RWPE1 (cell line): ENCODE measurements at regions of chr6 and their contacts with region 1.

Region 1: GRCh38 chr6:35710241-35710847 is 21.6 kb upstream of the FKBP5 start:
- DNase-seq: no peak
- H3K27ac ChIP-seq: peak overlapping the region; percentile 42; the same call in 1 of the 2 replicates
- CTCF ChIP-seq: no peak

Region 2: DNA sequence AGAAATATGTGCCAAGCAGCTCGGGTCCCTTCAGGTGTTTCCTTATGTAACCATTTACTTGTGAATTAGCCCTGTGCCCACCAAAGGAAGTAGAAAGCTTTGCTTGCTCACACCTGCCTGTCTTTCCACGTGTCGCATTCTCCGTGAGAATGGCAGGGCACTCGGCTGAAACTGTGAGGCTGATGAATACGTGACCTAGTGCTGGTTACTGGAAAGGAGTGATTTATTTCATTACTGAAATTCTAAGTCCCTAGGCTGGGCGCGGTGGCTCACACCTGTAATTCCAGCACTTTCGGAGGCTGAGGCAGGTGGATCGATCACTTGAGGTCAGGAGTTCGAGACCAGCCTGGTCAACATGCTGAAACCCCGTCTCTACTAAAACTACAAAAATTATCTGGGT is 151.8 kb before region 1 on chr6:
- CTCF ChIA-PET with region 1: no interaction called
- POLR2A ChIA-PET with region 1: interaction called, 17 read pairs
- DNase-seq: no peak
- H3K27ac ChIP-seq: no peak overlapping the region
- CTCF ChIP-seq: no peak

Region 3: DNA sequence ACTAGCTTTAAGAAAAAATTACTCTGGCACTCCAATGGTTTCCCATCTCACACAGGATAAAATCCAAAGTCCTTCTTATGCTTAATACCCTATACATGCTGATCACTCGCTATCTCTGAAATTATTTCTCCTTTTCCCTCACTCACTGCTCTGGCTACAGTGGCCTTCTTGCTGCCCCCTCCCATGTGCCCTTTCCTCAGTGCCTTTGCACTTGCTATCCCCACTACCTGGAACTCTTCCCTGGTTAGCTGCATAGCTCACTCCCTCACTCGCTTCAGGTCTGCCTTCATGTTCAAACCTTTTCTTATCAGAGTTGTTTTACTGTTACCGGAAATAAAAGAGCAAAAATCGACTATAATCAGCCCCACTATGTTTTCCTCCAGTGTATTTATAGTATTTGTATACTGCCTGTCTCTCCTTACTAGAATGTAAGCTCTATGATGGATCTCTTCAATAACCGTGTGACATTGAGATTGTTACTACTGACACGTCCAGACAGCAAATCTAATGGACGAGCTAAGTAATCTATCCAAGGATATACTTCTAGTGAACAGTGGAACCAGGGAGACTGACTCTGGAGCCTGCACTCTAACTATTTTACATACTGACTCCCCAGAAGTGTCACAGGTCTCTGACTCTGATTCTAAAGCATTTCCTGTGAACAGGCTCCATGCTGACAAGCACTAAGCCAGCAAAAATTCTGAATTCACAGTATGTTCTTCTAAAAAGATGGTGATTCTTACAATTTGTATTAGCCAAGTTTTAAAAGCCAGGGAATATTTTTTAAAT is 46.7 kb before region 1 on chr6:
- CTCF ChIA-PET with region 1: no interaction called
- POLR2A ChIA-PET with region 1: no interaction called
- DNase-seq: no peak
- H3K27ac ChIP-seq: peak overlapping the region; percentile 68
- CTCF ChIP-seq: no peak

Region 4: DNA sequence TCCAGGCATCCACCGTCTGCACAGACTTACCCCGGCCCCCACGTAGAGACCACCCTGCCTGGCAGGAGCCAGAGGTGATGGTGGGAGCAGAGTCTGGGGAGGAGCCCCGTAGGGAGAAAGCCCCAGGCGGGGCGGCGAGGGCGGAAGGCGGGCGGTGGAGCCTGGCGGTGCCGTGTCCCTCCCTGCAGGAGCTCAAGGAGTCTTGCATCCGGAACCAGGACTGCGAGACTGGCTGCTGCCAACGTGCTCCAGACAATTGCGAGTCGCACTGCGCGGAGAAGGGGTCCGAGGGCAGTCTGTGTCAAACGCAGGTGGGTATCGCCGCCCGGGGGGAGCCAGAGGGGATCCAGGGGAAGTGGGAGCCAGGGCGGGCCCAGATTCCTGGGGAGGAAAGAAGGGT is 76.5 kb after region 1 on chr6:
- CTCF ChIA-PET with region 1: no interaction called
- POLR2A ChIA-PET with region 1: no interaction called
- DNase-seq: no peak
- H3K27ac ChIP-seq: no peak overlapping the region
- CTCF ChIP-seq: no peak